Activated T-helper 2 cell treated with anti-CD3 and anti-CD28 coated beads, Interferon-gamma antibody, Interleukin-2, Interleukin-4, amounts not matched to agents 10 μg/mL and 5 μg/mL and 100 μg/mL, durations not matched to agents 14 hours and 24 hours and 36 hours (primary cell): ENCODE measurements at regions of chr1 and their contacts with region 1.

Region 1: GRCh38 chr1:199226163-199226562 is 587.3 kb downstream of the PTPRC start:
- DNase-seq: no peak
- H3K4me3 Mint-ChIP-seq: peak overlapping the region; percentile 6
- H3K27ac Mint-ChIP-seq: peak overlapping the region; percentile 1
- H3K4me1 Mint-ChIP-seq: peaks cover 18% of the 10 kb centered on the region
- H3K27me3 Mint-ChIP-seq: peaks cover 3% of the 10 kb centered on the region

Region 2: GRCh38 chr1:198734323-198735008 is 491.7 kb before region 1 on chr1:
- intact Hi-C with region 1: loop called (anchors 2 kb)
- DNase-seq: no peak
- H3K4me3 Mint-ChIP-seq: no peak overlapping the region
- H3K27ac Mint-ChIP-seq: peak overlapping the region; percentile 73
- H3K4me1 Mint-ChIP-seq: peaks cover 62% of the 10 kb centered on the region
- H3K27me3 Mint-ChIP-seq: no peaks in the 10 kb centered on the region

Region 3: DNA sequence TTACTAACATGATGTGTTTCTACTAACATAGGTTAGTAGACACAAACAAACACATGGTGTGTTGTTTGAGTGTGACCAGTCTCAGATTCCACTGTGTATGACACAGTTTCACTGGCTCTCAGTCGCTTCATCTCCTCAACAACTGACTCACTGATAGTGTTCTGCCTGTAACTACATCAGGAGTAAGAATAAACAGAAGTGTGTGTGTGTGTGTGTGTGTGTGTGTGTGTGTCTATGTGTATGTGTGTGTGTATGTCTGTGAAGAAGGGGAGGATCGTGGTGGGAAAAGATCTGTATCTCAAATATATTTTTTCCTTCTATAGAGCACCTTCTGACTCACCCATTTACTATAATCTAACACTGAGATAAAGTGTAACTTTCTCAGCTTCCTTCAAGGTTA is 196.3 kb before region 1 on chr1:
- intact Hi-C with region 1: loop called (anchors 10 kb)
- DNase-seq: no peak
- H3K4me3 Mint-ChIP-seq: no peak overlapping the region
- H3K27ac Mint-ChIP-seq: peak overlapping the region; percentile 73
- H3K4me1 Mint-ChIP-seq: peaks cover 56% of the 10 kb centered on the region
- H3K27me3 Mint-ChIP-seq: peaks cover 2% of the 10 kb centered on the region

Region 4: DNA sequence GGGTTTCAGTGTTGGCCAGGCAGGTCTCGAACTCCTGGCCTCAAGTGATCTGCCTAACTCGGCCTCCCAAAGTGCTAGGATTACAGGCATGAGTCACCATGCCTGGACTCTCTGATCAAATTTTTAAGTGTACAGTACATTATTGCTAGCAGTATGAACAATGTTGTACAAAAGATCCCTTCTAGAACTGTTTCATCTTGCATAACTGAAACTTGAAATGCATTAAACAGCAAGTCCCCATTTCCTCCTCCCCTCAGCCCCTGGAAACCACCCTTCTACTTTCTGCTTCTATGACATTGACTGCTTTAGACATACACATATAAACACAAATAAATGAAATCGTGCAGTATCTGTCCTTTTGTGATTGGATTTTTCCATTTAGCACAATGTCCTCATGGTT is 123.9 kb before region 1 on chr1:
- intact Hi-C with region 1: no loop called
- DNase-seq: no peak
- H3K4me3 Mint-ChIP-seq: no peak overlapping the region
- H3K27ac Mint-ChIP-seq: no peak overlapping the region
- H3K4me1 Mint-ChIP-seq: peaks cover 15% of the 10 kb centered on the region
- H3K27me3 Mint-ChIP-seq: no peaks in the 10 kb centered on the region

Region 5: GRCh38 chr1:199202331-199202730 is 23.8 kb before region 1 on chr1:
- intact Hi-C with region 1: no loop called
- DNase-seq: no peak
- H3K4me3 Mint-ChIP-seq: no peak overlapping the region
- H3K27ac Mint-ChIP-seq: no peak overlapping the region
- H3K4me1 Mint-ChIP-seq: peaks cover 2% of the 10 kb centered on the region
- H3K27me3 Mint-ChIP-seq: peaks cover 11% of the 10 kb centered on the region